Activated T-helper 2 cell treated with anti-CD3 and anti-CD28 coated beads, Interferon-gamma antibody, Interleukin-2, Interleukin-4, amounts not matched to agents 10 μg/mL and 5 μg/mL and 100 μg/mL, durations not matched to agents 14 hours and 24 hours and 36 hours (primary cell): ENCODE measurements at regions of chr1 and their contacts with region 1.

Region 1: GRCh38 chr1:183956559-183957188 is 80.9 kb downstream of the COLGALT2 start:
- DNase-seq: peak; percentile 63
- H3K4me3 Mint-ChIP-seq: no peak overlapping the region
- H3K27ac Mint-ChIP-seq: peak overlapping the region; percentile 88
- H3K4me1 Mint-ChIP-seq: peaks cover 18% of the 10 kb centered on the region
- H3K27me3 Mint-ChIP-seq: no peaks in the 10 kb centered on the region

Region 2: GRCh38 chr1:183989078-183989577 is 32.5 kb after region 1 on chr1:
- intact Hi-C with region 1: loop called (anchors 2 kb)
- DNase-seq: no peak
- H3K4me3 Mint-ChIP-seq: no peak overlapping the region
- H3K27ac Mint-ChIP-seq: no peak overlapping the region
- H3K4me1 Mint-ChIP-seq: peaks cover 25% of the 10 kb centered on the region
- H3K27me3 Mint-ChIP-seq: peaks cover 3% of the 10 kb centered on the region

Region 3: GRCh38 chr1:184465489-184466146 is 508.9 kb after region 1 on chr1:
- intact Hi-C with region 1: no loop called
- DNase-seq: no peak
- H3K4me3 Mint-ChIP-seq: no peak overlapping the region
- H3K27ac Mint-ChIP-seq: no peak overlapping the region
- H3K4me1 Mint-ChIP-seq: no peaks in the 10 kb centered on the region
- H3K27me3 Mint-ChIP-seq: peaks cover 8% of the 10 kb centered on the region